Activated CD4-positive, alpha-beta memory T cell treated with anti-CD3 and anti-CD28 coated beads for 36 hours (primary cell): ENCODE measurements at regions of chr17 and their contacts with region 1.

Region 1: GRCh38 chr17:7351665-7352501 is at the start of gene KCTD11:
- DNase-seq: peak; percentile 87
- H3K4me3 Mint-ChIP-seq: peak within 1 kb of the TSS; percentile 74
- H3K27ac Mint-ChIP-seq: peak within 1 kb of the TSS; percentile 68
- H3K4me1 Mint-ChIP-seq: peaks cover 39% of the 10 kb centered on the region
- H3K27me3 Mint-ChIP-seq: no peaks in the 10 kb centered on the region
- total RNA-seq, gene KCTD11: 2.6 to 2.8 TPM

Region 2: GRCh38 chr17:7177196-7177953 is 174.5 kb before region 1 on chr17:
- CTCF ChIA-PET with region 1: no interaction called
- POLR2A ChIA-PET with region 1: no interaction called
- intact Hi-C with region 1: no loop called
- DNase-seq: peak; percentile 76
- H3K4me3 Mint-ChIP-seq: peak overlapping the region; percentile 58
- H3K27ac Mint-ChIP-seq: no peak overlapping the region
- H3K4me1 Mint-ChIP-seq: peaks cover 11% of the 10 kb centered on the region
- H3K27me3 Mint-ChIP-seq: peaks cover 12% of the 10 kb centered on the region

Region 3: GRCh38 chr17:7204828-7205461 is 146.9 kb before region 1 on chr17:
- CTCF ChIA-PET with region 1: no interaction called
- POLR2A ChIA-PET with region 1: no interaction called
- intact Hi-C with region 1: no loop called
- DNase-seq: peak; percentile 94
- H3K4me3 Mint-ChIP-seq: peak overlapping the region; percentile 36
- H3K27ac Mint-ChIP-seq: peak overlapping the region; percentile 30
- H3K4me1 Mint-ChIP-seq: peaks cover 21% of the 10 kb centered on the region
- H3K27me3 Mint-ChIP-seq: no peaks in the 10 kb centered on the region

Region 4: GRCh38 chr17:7252176-7253043 is 99.5 kb before region 1 on chr17 and contains the start of gene ELP5:
- CTCF ChIA-PET with region 1: no interaction called
- POLR2A ChIA-PET with region 1: no interaction called
- intact Hi-C with region 1: no loop called
- DNase-seq: peak; percentile 94
- H3K4me3 Mint-ChIP-seq: peak within 1 kb of the TSS; percentile 96
- H3K27ac Mint-ChIP-seq: peak within 1 kb of the TSS; percentile 100
- H3K4me1 Mint-ChIP-seq: peaks cover 40% of the 10 kb centered on the region
- H3K27me3 Mint-ChIP-seq: no peaks in the 10 kb centered on the region
- total RNA-seq, gene ELP5: 49.6 to 52.4 TPM

Region 5: GRCh38 chr17:7314719-7315569 is 36.9 kb before region 1 on chr17 and contains the start of gene GPS2:
- CTCF ChIA-PET with region 1: interaction called, 3 read pairs
- POLR2A ChIA-PET with region 1: no interaction called
- intact Hi-C with region 1: loop called (anchors 2 kb)
- DNase-seq: peak; percentile 96
- H3K4me3 Mint-ChIP-seq: peak within 1 kb of the TSS; percentile 87
- H3K27ac Mint-ChIP-seq: peak within 1 kb of the TSS; percentile 88
- H3K4me1 Mint-ChIP-seq: peaks cover 51% of the 10 kb centered on the region
- H3K27me3 Mint-ChIP-seq: no peaks in the 10 kb centered on the region
- total RNA-seq, gene GPS2: 34.9 to 38.7 TPM

Region 6: GRCh38 chr17:7336240-7337175 is 15.4 kb before region 1 on chr17 and contains the start of gene ACAP1:
- CTCF ChIA-PET with region 1: interaction called, 30 read pairs
- POLR2A ChIA-PET with region 1: interaction called, 34 read pairs
- intact Hi-C with region 1: loop called (anchors 1 kb)
- DNase-seq: peak; percentile 93
- H3K4me3 Mint-ChIP-seq: peak within 1 kb of the TSS; percentile 91
- H3K27ac Mint-ChIP-seq: peak within 1 kb of the TSS; percentile 98
- H3K4me1 Mint-ChIP-seq: peaks cover 51% of the 10 kb centered on the region
- H3K27me3 Mint-ChIP-seq: no peaks in the 10 kb centered on the region
- total RNA-seq, gene ACAP1: 391 to 405 TPM

Region 7: DNA sequence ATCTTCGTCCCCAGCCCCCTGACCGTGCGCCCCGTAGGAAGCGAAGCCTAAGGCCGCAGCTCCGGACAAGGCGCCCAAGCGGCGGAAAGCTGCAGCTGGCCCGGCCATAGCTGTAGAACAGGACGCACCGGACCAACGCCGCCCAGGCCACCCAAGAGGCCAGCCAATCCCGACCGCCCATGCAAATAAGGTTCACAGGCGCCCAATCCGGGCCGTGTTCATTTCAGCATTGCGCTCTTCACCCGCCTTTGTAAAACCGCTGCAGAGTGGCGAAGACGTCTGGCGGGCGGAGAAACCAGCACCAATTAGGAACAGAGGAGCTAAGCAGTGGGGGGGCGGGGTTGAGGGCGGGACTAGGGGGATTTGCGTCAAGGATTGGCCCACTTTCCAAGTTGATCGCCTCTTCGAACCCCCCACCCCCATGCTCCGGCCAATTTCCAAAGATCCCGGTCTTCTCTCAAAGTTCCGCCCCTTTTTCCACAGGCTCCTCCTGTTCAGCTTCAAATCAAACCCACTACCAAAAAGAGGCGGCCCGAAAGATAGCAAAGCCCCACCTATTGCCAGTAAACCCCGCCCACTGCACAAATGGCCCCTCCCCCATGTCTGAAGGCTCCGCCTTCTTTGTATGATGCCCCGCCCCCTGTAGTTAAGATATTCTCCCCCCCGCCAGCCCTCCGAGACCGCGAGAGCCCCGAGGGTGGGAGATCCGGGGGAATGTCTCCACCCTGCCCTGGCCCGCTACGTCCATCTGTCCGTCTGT is 52.3 kb after region 1 on chr17 and contains the start of gene TMEM256:
- CTCF ChIA-PET with region 1: interaction called, 3 read pairs
- POLR2A ChIA-PET with region 1: interaction called, 3 read pairs
- intact Hi-C with region 1: loop called (anchors 2 kb)
- DNase-seq: peak; percentile 99
- H3K4me3 Mint-ChIP-seq: peak within 1 kb of the TSS; percentile 97
- H3K27ac Mint-ChIP-seq: peak within 1 kb of the TSS; percentile 92
- H3K4me1 Mint-ChIP-seq: peaks cover 25% of the 10 kb centered on the region
- H3K27me3 Mint-ChIP-seq: no peaks in the 10 kb centered on the region
- total RNA-seq, gene TMEM256: 87.0 to 88.5 TPM

Region 8: DNA sequence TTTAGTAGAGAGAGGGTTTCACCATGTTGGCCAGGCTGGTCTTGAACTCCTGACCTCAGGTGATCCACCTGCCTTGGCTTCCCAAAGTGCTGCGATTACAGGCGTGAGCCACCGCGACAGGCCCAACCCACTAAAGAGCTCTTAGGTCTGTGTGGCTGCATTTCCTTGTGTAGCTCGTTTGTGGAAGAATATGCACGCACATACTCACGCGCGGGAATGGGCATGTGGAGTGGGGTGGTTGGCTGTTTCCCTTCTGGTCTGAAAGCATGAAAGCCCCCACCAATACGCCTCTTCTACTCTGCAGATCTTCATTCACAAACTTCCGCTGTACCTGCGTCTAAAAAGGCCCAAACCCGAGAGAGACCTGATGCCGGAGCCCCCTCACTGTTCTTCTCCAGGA is 103.1 kb after region 1 on chr17:
- CTCF ChIA-PET with region 1: interaction called, 4 read pairs
- POLR2A ChIA-PET with region 1: no interaction called
- intact Hi-C with region 1: loop called (anchors 5 kb)
- DNase-seq: no peak
- H3K4me3 Mint-ChIP-seq: peak overlapping the region; percentile 93
- H3K27ac Mint-ChIP-seq: peak overlapping the region; percentile 96
- H3K4me1 Mint-ChIP-seq: peaks cover 13% of the 10 kb centered on the region
- H3K27me3 Mint-ChIP-seq: no peaks in the 10 kb centered on the region

Region 9: GRCh38 chr17:7515911-7516610 is 164.2 kb after region 1 on chr17:
- CTCF ChIA-PET with region 1: interaction called, 19 read pairs
- POLR2A ChIA-PET with region 1: no interaction called
- intact Hi-C with region 1: no loop called
- DNase-seq: no peak
- H3K4me3 Mint-ChIP-seq: no peak overlapping the region
- H3K27ac Mint-ChIP-seq: no peak overlapping the region
- H3K4me1 Mint-ChIP-seq: no peaks in the 10 kb centered on the region
- H3K27me3 Mint-ChIP-seq: no peaks in the 10 kb centered on the region

Region 10: DNA sequence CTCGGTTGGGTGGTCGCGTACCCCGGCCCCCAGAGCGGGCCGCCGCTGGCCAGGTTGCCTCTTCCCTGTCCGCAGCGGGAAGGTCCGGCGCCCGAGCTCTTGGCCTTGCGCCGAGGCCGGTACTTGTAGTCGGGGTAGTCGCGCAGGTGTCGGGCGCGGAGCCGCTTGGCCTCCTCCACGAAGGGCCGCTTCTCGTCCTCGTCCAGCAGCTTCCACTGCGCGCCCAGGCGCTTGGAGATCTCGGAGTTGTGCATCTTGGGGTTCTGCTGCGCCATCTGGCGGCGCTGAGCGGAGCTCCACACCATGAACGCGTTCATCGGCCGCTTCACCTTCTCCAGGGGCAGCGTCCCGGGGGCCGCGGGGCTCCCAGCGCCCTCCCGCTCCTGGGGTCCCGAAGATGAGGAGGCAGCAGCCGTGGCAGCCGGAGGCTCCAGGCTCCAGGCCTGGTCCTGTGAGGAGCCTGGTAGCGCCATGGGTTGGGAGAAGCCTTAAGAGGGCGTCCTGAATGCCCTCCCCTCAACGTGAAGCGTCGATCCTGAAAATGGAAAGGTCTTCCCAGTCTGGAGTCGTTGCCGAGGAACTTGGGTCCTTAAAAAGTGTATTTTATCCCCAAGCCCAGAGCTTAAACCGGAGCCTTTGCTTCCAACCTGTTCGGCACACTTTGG is 237.5 kb after region 1 on chr17:
- CTCF ChIA-PET with region 1: interaction called, 14 read pairs
- POLR2A ChIA-PET with region 1: no interaction called
- intact Hi-C with region 1: no loop called
- DNase-seq: peak; percentile 74
- H3K4me3 Mint-ChIP-seq: no peak overlapping the region
- H3K27ac Mint-ChIP-seq: no peak overlapping the region
- H3K4me1 Mint-ChIP-seq: peaks cover 10% of the 10 kb centered on the region
- H3K27me3 Mint-ChIP-seq: no peaks in the 10 kb centered on the region

Region 11: DNA sequence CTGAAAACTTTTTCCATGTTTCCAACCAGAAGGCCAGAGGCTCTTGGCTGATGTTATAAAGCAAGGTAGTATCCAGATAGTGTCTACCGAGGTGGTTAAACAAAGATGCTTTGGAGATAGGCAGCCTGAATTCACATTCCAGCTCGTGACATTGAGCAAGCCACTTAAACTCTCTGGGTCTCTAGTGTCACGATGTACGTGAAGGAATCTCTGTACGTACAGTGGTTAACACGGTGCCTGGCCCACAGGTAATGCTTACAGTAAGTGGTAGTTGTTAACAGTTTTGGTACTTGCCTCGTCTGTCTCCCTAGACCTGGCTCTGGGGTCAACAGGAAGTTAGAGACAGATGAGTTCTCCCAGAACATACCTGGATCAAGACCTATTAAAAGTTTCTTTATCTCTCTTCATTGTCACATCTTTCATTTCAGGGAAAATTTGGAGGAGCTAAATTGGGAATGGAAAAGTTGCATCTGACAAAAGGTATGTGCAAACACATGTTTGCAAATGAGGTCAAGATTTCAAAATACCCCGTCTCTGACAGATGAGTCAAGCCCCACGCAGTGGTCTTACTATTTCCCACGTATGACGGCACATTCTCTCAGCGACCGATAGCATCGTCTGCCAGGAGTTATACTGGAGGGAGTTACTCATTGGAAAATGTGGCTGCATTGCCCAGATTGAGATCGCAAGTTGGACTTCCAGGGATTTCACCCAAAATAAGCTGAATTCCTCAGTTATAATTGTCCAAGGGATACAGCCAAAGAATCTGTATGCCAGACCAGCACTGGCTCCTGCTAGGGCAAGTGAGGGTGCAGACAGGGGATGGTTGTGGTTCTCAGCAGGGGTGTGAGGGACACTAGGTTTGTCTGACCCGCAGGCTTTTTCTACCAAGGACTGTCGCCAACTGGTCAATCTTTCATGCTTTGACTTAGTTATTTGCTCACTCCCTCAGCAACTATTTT is 1297.6 kb after region 1 on chr17:
- CTCF ChIA-PET with region 1: no interaction called
- POLR2A ChIA-PET with region 1: no interaction called
- intact Hi-C with region 1: no loop called
- DNase-seq: no peak
- H3K4me3 Mint-ChIP-seq: no peak overlapping the region
- H3K27ac Mint-ChIP-seq: no peak overlapping the region
- H3K4me1 Mint-ChIP-seq: no peaks in the 10 kb centered on the region
- H3K27me3 Mint-ChIP-seq: peaks cover 29% of the 10 kb centered on the region